ENCODE measurements at regions of chr15 and their contacts with region 1.

Region 1: DNA sequence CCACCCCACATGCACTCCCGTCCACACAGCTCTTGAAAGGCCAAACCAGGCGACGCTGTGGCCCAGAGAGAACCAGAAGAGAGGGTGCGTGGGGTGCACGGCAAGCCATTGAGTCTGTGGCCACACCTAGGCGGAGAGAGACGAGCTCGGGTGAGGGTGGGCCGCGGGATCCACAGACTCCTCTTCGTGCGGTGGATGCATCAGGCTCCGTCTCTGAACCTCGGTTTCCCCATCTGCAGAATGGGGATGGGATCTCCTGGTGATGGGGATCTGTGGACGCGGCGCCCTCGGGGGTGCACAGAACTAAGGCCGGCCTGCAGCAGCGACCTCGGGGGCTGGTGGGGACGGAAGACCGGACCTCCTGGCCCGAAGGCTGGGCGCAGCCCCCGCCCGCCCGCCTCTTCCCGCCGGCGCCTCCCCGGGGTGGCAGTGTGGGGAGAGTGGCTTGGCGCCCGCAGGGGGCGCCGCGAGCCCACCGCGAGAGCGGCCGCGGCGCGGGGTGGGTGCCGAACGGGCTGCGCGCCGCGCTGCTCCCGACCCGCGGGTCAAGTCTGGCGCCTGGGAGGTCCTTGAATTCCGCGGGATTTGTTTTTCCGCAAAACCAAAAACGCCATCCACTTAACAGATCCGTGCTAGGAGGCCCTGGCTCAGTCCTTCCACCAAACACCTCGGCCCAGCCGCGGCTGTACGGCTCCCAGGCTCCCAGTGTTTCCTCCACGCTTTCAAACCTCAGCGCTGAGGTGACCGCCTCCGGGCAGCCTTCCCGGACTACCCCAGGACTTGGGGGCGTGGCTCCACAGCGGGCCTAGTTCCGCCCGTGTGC is 13.2 kb upstream of the ADPGK start:
- DNase-seq: peak; percentile 25 to 67 (median 48)
- H3K4me3 ChIP-seq: peak overlapping the region; percentile 31
- H3K27ac ChIP-seq: no peak overlapping the region
- H3K4me1 ChIP-seq: peaks cover 8% of the 10 kb centered on the region
- H3K27me3 ChIP-seq: no peaks in the 10 kb centered on the region
- CTCF ChIP-seq: peak in 2 of 3 donors; percentile 57 to 66
- EP300 ChIP-seq: no peak
- POLR2A ChIP-seq: no peak

Region 2: DNA sequence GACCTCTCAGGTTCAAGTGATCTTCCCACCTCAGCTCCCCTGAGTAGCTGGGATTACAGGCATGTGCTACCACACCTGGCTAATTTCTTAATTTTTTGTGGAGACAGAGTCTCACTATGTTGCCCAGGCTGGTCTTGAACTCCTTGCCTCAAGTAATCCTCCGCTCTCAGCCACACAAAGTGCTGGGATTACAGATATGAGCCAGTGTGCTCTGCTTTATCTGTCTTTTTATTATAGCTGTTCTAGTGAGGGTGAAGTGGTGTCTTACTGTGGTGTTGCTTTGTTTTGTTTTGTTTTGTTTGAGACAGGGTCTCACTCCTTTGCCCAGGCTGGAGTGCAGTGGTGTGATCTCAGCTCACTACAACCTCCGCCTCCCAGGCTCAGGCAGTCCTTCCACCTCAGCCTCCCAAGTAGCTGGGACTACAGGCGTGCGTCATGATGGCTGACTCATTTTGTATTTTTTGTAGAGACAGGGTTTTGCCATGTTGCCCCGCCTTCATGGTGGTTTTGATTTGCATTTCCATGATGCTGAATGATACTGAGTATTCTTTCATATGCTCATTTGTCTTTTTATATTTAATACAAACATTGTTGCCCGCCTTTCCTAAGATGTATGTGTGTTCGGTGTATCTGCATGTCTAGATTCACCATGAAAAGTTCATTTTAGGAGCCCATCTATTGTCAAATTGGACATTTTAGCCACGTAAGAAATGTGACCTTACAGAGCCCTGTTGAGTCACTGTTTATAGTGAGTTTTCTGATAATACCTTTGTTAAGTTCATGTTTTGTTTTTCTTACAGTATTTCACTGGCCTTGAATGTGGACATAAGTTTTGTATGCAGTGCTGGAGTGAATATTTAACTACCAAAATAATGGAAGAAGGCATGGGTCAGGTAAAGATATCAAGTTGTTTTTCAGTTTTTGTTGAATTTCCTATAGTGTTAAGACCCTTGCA is 242.0 kb before region 1 on chr15:
- intact Hi-C with region 1: no loop called
- DNase-seq: no peak
- H3K4me3 ChIP-seq: no peak overlapping the region
- H3K27ac ChIP-seq: no peak overlapping the region
- H3K4me1 ChIP-seq: no peaks in the 10 kb centered on the region
- H3K27me3 ChIP-seq: no peaks in the 10 kb centered on the region
- CTCF ChIP-seq: no peak
- EP300 ChIP-seq: no peak
- POLR2A ChIP-seq: no peak

Region 3: DNA sequence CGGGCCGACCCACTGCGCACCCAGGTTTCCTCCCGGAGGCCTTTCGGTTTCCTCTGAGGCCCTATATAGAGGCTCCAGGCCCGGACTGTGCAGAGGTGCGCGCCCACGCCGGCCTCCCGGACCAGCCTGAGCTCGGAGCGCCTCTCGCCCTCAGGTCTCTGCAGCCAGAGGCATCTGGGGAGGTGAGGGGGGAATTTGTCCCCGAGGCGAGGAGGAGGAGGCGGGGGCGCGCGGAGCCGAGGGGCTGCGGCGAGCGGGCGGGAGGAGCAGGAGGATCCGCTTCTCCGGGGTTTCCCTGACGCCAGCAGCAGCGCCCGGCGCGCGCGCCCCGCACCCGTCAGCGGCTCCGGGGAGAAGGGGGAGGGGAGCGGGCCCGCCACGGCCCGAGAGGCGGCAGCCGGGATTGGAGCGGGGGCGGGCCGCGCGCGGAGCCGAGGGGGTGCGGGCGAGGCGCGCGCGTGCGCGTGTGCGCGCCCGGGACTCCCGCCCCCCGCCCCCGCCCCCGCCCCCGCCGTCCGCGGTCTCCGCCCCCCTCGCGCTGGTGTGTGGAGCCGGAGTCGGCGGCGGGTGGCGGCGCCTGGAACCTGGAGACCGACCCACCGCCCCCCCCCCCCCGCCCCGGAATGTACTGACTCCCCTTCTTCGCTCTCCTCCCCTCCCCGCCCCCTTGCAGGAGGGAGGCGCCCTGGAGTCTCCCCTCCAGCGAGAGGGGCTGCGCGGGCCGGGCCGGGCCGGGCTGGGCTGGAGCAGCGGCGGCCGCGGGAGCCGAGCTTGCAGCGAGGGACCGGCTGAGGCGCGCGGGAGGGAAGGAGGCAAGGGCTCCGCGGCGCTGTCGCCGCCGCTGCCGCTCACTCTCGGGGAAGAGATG is 255.3 kb after region 1 on chr15 and contains the start of gene NEO1:
- intact Hi-C with region 1: loop called in 1 of 4 experiments (anchors 10 kb)
- DNase-seq: peak; percentile 89 to 95 (median 93)
- H3K4me3 ChIP-seq: peak within 1 kb of the TSS; percentile 64
- H3K27ac ChIP-seq: peak within 1 kb of the TSS; percentile 72 to 96
- H3K4me1 ChIP-seq: peaks cover 2% of the 10 kb centered on the region
- H3K27me3 ChIP-seq: no peaks in the 10 kb centered on the region
- CTCF ChIP-seq: no peak
- EP300 ChIP-seq: no peak
- POLR2A ChIP-seq: peak; percentile 69
- total RNA-seq, gene NEO1: 22.8 to 51.3 (median 40.7) TPM

Region 4: GRCh38 chr15:73081321-73081958 is 284.7 kb after region 1 on chr15:
- intact Hi-C with region 1: loop called (anchors 2 to 10 kb)
- DNase-seq: peak in 1 of 5 donors; percentile 27
- H3K4me3 ChIP-seq: no peak overlapping the region
- H3K27ac ChIP-seq: no peak overlapping the region
- H3K4me1 ChIP-seq: peaks cover 5% of the 10 kb centered on the region
- H3K27me3 ChIP-seq: no peaks in the 10 kb centered on the region
- CTCF ChIP-seq: peak; percentile 62 to 67 (median 66)
- EP300 ChIP-seq: no peak
- POLR2A ChIP-seq: no peak